IMR-90 (cell line): ENCODE measurements at regions of chrX and their contacts with region 1.

Region 1: DNA sequence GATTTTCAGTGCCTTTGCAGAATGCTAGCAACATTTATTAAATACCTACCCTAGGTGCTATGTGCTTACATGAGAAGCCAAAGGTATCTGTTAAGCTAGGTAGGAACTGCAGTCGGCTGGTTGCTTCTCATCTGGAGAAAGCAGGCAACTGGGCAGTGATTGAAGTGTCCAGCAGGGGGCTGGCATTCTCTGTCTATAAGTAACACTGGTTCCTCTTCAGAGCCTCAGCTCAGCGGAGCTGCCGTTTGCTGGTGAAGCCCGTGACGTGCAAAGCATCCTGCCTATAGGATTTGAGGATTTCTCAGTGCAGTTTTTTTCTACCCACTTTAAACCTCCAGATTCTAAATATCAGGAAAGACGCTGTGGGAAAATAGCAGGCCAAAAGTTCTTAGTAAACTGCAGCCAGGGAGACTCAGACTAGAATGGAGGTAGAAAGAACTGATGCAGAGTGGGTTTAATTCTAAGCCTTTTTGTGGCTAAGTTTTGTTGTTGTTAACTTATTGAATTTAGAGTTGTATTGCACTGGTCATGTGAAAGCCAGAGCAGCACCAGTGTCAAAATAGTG is at the start of gene GRPR:
- DNase-seq: peak; percentile 92
- ATAC-seq: peak; percentile 100
- H3K4me3 ChIP-seq: no peak within 1 kb of the TSS; the same call in 1 of the 2 replicates
- H3K27ac ChIP-seq: no peak within 1 kb of the TSS
- H3K4me1 ChIP-seq: peaks cover 2% of the 10 kb centered on the region; the same call in 1 of the 2 replicates
- H3K27me3 ChIP-seq: no peaks in the 10 kb centered on the region; the same call in 1 of the 2 replicates
- CTCF ChIP-seq: peak; percentile 80
- POLR2A ChIP-seq: no peak
- RAD21 ChIP-seq: peak; percentile 83
- total RNA-seq, gene GRPR: 13.6 and 16.4 TPM in 2 replicates

Region 2: GRCh38 chrX:15321447-15321846 is 801.9 kb before region 1 on chrX:
- CTCF ChIA-PET with region 1: no interaction called
- POLR2A ChIA-PET with region 1: no interaction called
- dilution Hi-C with region 1: no loop called
- in situ Hi-C with region 1: no loop called
- intact Hi-C with region 1: no loop called
- DNase-seq: no peak
- ATAC-seq: no peak
- H3K4me3 ChIP-seq: no peak overlapping the region
- H3K27ac ChIP-seq: no peak overlapping the region
- H3K4me1 ChIP-seq: no peaks in the 10 kb centered on the region
- H3K27me3 ChIP-seq: no peaks in the 10 kb centered on the region
- CTCF ChIP-seq: no peak
- POLR2A ChIP-seq: no peak
- RAD21 ChIP-seq: no peak

Region 3: DNA sequence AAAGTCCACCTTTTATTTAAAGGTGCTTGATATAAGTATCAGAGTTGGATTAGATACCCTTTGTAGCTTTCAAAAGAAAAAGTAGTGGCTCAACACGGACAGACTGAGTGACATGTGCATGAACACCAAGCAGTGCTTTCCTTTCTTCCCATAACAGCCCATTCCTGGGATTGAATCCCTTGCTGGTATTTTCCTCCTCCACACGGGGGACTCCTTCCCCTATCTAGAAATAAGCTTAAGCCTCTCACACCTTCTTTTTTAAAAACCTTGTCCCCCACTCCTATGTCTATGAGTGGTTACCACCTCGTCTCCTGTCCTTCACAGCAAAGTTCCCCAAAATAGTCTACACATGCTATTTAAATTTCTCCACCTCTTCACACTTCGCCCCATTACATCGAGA is 273.7 kb before region 1 on chrX:
- CTCF ChIA-PET with region 1: no interaction called
- POLR2A ChIA-PET with region 1: no interaction called
- dilution Hi-C with region 1: no loop called
- in situ Hi-C with region 1: no loop called
- intact Hi-C with region 1: loop called (anchors 2 kb)
- DNase-seq: no peak
- ATAC-seq: peak; percentile 40; the same call in 1 of the 2 replicates
- H3K4me3 ChIP-seq: no peak overlapping the region
- H3K27ac ChIP-seq: no peak overlapping the region
- H3K4me1 ChIP-seq: no peaks in the 10 kb centered on the region
- H3K27me3 ChIP-seq: peaks cover 2% of the 10 kb centered on the region; the same call in 1 of the 2 replicates
- CTCF ChIP-seq: peak; percentile 41
- POLR2A ChIP-seq: no peak
- RAD21 ChIP-seq: peak; percentile 46

Region 4: DNA sequence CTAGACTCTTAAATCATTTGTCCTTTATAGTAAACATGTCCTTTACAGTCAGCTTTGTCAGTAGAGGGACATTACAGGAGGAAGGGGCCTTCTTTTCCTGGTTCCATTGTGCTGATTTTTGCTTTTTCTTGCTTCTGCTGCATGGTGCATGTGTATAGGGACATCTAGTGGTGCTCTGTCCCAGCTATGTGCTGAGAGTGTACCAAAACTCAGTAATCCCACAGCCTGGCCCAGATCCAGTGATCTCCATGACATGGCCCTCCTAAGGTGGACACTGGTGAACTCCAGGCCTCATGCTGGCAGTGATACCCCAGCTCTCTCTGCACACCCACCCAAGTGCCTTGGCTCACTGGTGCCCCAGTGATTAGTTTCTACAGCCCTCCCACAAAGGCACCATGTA is 89.1 kb after region 1 on chrX:
- CTCF ChIA-PET with region 1: interaction called, 9 read pairs
- POLR2A ChIA-PET with region 1: no interaction called
- dilution Hi-C with region 1: no loop called
- in situ Hi-C with region 1: no loop called
- intact Hi-C with region 1: loop called (anchors 2 kb)
- DNase-seq: peak; percentile 34
- ATAC-seq: peak; percentile 69; the same call in 1 of the 2 replicates
- H3K4me3 ChIP-seq: no peak overlapping the region
- H3K27ac ChIP-seq: no peak overlapping the region
- H3K4me1 ChIP-seq: no peaks in the 10 kb centered on the region
- H3K27me3 ChIP-seq: no peaks in the 10 kb centered on the region
- CTCF ChIP-seq: peak; percentile 43
- POLR2A ChIP-seq: no peak
- RAD21 ChIP-seq: peak; percentile 59

Region 5: GRCh38 chrX:16436348-16437188 is 313.3 kb after region 1 on chrX:
- CTCF ChIA-PET with region 1: interaction called, 4 read pairs
- POLR2A ChIA-PET with region 1: no interaction called
- dilution Hi-C with region 1: no loop called
- in situ Hi-C with region 1: loop called (anchors 10 kb)
- intact Hi-C with region 1: loop called (anchors 2 kb)
- DNase-seq: peak; percentile 75
- ATAC-seq: peak; percentile 94
- H3K4me3 ChIP-seq: no peak overlapping the region
- H3K27ac ChIP-seq: no peak overlapping the region
- H3K4me1 ChIP-seq: no peaks in the 10 kb centered on the region
- H3K27me3 ChIP-seq: peaks cover 1% of the 10 kb centered on the region; the same call in 1 of the 2 replicates
- CTCF ChIP-seq: peak; percentile 70
- POLR2A ChIP-seq: no peak
- RAD21 ChIP-seq: peak; percentile 65

Region 6: GRCh38 chrX:16670998-16671397 is 547.7 kb after region 1 on chrX:
- CTCF ChIA-PET with region 1: no interaction called
- POLR2A ChIA-PET with region 1: no interaction called
- dilution Hi-C with region 1: no loop called
- in situ Hi-C with region 1: loop called (anchors 10 kb)
- intact Hi-C with region 1: loop called (anchors 1 kb)
- DNase-seq: peak; percentile 72
- ATAC-seq: peak; percentile 76
- H3K4me3 ChIP-seq: no peak overlapping the region
- H3K27ac ChIP-seq: no peak overlapping the region
- H3K4me1 ChIP-seq: peaks cover 3% of the 10 kb centered on the region
- H3K27me3 ChIP-seq: no peaks in the 10 kb centered on the region; the same call in 1 of the 2 replicates
- CTCF ChIP-seq: peak; percentile 61
- POLR2A ChIP-seq: no peak
- RAD21 ChIP-seq: peak; percentile 71